ENCODE measurements at regions of chr3 and their contacts with region 1.

Region 1: DNA sequence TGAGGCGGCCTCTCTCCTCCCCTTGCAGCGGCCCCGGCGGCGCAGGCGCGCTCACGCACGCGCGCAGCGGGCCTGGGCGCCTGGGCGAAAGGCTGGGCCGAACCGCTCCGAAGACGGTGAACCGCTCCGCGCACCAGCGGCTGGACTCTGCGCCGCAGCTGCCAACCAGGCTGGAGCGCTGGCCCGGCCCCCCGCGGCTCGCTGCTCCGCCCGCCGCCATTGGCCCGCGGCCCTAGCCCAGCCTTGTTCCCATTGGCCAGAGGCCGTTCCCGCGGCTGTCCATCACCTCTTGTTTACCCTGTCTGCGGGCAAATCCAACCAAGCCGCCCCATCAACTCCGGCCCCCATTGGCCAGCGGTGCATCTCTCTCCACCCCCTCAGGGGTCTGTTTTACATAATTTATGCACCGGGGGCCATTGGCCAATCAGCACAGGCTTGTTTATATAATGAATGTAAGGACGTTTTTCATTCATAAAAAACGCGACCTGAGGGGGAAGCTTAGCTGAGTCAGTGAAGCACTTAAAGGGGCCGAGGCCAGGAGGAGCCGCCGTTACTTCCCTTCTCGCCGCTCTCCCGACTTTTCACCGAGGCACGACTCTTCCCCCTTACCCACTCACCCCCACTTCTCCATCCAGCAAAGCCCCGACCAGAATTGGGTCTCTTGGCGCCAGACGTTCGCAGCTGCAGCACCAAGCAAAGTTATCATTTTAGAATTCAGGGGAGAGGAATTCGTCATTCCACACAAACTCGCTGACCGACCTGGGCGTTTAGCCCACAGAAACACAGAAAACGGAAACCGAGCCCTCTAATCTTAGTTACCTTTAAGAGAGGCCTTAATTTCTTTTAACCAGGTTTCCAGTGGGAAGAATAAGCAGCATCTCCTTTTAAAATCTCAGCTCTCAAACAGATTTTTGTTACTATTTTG is at the start of gene ETV5:
- DNase-seq: peak; percentile 89
- H3K4me3 Mint-ChIP-seq: peak within 1 kb of the TSS; percentile 80
- H3K27ac Mint-ChIP-seq: no peak within 1 kb of the TSS
- H3K4me1 Mint-ChIP-seq: peaks cover 26% of the 10 kb centered on the region
- H3K27me3 Mint-ChIP-seq: peaks cover 81% of the 10 kb centered on the region
- total RNA-seq, gene ETV5: 0.85 and 1.3 TPM in 2 replicates

Region 2: GRCh38 chr3:185824476-185825378 is 284.5 kb before region 1 on chr3 and contains the start of gene IGF2BP2:
- intact Hi-C with region 1: loop called (anchors 5 kb)
- DNase-seq: peak; percentile 46
- H3K4me3 Mint-ChIP-seq: peak within 1 kb of the TSS; percentile 75
- H3K27ac Mint-ChIP-seq: no peak within 1 kb of the TSS
- H3K4me1 Mint-ChIP-seq: peaks cover 10% of the 10 kb centered on the region
- H3K27me3 Mint-ChIP-seq: peaks cover 76% of the 10 kb centered on the region
- total RNA-seq, gene IGF2BP2: 0.05 and 1.6 TPM in 2 replicates

Region 3: DNA sequence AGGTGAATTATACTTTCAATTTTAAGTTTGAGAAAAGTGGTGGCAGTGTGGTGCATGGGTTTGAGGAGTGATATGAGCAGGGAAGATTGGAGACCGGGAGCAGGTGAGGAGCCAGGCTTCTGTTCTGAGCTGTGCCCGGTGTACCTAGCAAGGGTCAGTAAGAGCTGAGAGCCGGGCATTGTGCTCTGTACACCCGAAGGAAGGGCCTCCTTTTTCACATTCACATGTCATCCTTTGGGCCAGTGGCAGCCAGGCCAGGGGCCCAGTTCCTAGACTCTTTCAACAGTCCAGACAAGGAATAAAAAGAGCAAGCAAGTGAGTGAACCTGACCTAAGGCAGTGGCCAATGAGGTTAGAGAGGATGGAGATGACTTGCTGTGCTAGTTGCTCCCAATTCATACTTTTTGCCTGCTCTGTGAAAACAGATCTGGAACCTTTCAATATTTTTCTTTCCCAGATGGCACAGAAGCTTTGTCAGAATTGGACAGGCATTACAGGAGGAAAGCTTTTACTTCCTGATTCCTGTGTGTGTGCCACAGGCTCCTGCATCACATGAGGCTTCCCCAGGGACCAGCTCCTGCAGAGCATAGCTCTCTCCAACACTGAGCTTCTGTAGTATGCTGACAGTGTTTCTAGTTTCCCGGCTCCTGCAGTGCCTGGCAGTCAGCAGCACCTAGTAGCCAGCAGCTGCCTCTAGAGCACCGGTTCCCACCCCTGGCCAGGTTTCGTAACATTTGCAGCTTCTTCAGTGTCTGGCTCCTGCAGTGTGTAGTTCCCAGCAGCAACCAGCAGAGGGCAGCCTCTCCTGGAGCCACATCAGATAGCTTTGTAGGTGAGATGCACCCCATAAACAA is 166.1 kb before region 1 on chr3:
- intact Hi-C with region 1: no loop called
- DNase-seq: peak; percentile 75
- H3K4me3 Mint-ChIP-seq: no peak overlapping the region
- H3K27ac Mint-ChIP-seq: no peak overlapping the region
- H3K4me1 Mint-ChIP-seq: peaks cover 20% of the 10 kb centered on the region
- H3K27me3 Mint-ChIP-seq: peaks cover 24% of the 10 kb centered on the region

Region 4: DNA sequence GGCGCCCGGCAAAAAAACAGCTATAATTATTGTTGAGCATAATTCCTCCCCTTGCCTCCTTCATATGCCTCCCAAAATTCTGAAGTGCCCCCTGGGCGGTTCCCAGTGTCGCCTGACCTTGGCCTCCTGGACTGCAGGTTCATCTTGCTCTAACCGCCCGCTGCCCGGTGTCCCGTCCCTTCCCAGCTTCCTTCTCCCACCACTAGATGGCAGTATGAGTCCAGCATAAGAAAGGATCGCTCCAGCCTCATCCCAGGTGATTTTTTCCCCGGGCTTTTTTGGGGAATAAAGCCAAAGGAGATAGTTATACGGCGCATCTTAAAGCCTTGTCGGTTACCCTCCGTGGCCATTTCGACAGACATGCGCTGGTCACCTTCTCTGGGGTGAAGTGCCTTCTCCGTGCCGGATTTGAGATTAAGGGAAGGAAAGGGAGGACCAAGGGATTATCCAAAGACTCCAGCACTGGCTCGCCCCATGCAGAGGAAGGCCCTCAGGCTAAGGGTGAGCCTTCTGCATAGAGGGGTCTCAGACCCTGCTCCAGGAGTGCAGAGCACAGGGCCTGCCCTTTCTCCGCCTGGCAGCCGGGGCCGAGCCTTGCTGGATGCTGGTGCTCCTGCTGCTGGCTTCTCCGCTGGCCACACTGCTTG is 125.6 kb before region 1 on chr3:
- intact Hi-C with region 1: loop called (anchors 5 kb)
- DNase-seq: peak; percentile 16
- H3K4me3 Mint-ChIP-seq: no peak overlapping the region
- H3K27ac Mint-ChIP-seq: no peak overlapping the region
- H3K4me1 Mint-ChIP-seq: no peaks in the 10 kb centered on the region
- H3K27me3 Mint-ChIP-seq: peaks cover 42% of the 10 kb centered on the region

Region 5: GRCh38 chr3:186151077-186151971 is 42.1 kb after region 1 on chr3:
- intact Hi-C with region 1: loop called (anchors 1 kb)
- DNase-seq: no peak
- H3K4me3 Mint-ChIP-seq: no peak overlapping the region
- H3K27ac Mint-ChIP-seq: no peak overlapping the region
- H3K4me1 Mint-ChIP-seq: peaks cover 10% of the 10 kb centered on the region
- H3K27me3 Mint-ChIP-seq: peaks cover 53% of the 10 kb centered on the region

Region 6: DNA sequence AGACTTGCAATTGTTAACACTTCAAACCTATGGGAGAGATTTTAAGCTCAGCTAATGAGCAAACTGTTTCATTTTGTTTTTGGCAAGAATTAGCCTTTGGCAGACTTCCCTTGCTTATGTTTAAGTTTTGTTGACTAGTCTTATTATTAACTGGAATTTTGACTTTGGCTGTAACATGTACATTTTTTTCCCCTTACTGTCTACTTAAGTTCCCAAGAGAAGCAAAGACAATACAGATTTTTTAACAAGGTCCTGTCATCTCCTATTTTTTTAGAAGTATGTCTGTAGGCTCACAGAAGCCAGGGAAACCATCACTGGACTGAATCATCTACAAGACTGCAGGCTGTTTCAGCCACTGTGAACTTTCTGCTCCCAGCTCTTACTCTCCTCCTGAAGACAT is 178.5 kb after region 1 on chr3:
- intact Hi-C with region 1: no loop called
- DNase-seq: no peak
- H3K4me3 Mint-ChIP-seq: no peak overlapping the region
- H3K27ac Mint-ChIP-seq: no peak overlapping the region
- H3K4me1 Mint-ChIP-seq: no peaks in the 10 kb centered on the region
- H3K27me3 Mint-ChIP-seq: peaks cover 15% of the 10 kb centered on the region

Region 7: DNA sequence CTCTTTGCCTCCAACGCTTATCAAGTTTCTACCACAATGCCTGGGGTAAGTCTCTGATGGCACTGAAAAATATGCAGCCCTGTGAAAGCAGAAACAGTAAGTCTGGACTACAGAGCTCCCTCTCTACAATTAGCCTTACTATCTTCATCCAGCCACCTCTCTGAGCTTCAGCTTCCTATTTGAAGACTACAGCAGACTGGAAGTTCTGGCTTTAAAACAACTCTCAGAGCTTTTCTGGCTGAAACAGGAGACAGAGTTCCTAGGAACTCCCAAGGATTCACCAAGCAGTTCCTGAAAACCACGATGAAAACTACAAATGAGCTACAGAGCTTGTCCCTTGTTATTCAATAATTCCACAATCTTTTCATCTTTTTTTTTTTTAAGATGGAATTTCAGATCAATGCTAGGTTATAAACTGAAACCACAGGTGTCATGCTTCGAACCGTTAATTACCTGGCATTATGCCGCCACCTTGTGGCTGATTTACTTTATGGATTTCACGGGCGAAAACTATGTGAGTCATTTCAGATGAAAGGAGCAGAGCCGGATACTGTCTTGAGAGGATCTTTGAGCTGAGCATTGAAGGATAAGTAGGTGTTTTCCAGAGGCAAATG is 431.1 kb after region 1 on chr3:
- intact Hi-C with region 1: loop called (anchors 5 kb)
- DNase-seq: peak; percentile 70
- H3K4me3 Mint-ChIP-seq: no peak overlapping the region
- H3K27ac Mint-ChIP-seq: peak overlapping the region; percentile 20
- H3K4me1 Mint-ChIP-seq: peaks cover 31% of the 10 kb centered on the region
- H3K27me3 Mint-ChIP-seq: no peaks in the 10 kb centered on the region

Measured in activated T-helper 2 cell treated with anti-CD3 and anti-CD28 coated beads, Interferon-gamma antibody, Interleukin-2, Interleukin-4, amounts not matched to agents 10 μg/mL and 5 μg/mL and 100 μg/mL, durations not matched to agents 14 hours and 24 hours and 36 hours (primary cell).